WTC11 (cell line): ENCODE measurements at regions of chr3 and their contacts with region 1.

Region 1: DNA sequence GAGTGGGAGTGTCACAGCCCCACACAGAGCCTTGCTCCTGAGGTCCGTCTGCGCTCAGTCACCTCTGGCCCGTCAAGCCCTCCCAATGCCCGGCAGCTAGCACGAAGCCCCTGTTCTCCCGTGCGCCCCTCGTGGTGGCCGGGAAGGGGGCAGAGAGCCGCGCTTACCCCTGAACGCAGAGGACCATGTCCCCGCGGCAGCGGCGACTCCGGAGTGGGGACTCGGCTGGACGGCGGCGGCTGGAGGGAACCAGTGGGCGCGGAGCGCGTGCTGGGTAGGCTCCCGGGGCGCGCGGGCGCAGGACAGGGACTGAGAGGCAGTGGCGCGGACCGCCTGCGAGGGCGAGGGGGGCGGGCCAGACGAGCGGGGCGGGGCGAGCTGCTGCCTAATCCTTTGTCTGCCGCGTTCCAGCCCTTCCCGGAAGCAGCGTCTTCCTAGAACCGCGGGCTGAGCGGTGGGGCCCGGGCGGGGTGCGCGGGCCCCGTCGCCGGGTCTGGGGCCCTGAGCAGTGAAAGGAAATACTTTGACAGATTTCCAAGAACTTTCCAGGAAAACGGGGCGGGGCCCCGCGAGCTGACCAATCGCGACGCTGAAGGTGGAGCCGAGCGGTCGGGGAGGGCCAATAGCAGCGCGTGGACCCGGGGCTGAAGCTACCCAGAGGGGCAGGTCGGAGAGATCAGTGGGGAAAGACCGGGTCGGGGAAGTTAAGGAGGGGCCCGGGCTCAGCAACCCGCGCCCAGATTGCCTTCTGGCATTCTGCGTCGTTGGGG is at the start of gene CISH:
- DNase-seq: peak; percentile 94
- ATAC-seq: peak; percentile 81
- H3K4me3 Mint-ChIP-seq: peak within 1 kb of the TSS; percentile 76
- H3K27ac Mint-ChIP-seq: no peak within 1 kb of the TSS
- H3K4me1 Mint-ChIP-seq: peaks cover 24% of the 10 kb centered on the region
- H3K27me3 Mint-ChIP-seq: peaks cover 51% of the 10 kb centered on the region
- CTCF ChIP-seq: peak; percentile 46; the same call in 1 of the 2 replicates
- total RNA-seq, gene CISH: 1.8 to 2.4 TPM (median 1.9 TPM) in 3 replicates

Region 2: DNA sequence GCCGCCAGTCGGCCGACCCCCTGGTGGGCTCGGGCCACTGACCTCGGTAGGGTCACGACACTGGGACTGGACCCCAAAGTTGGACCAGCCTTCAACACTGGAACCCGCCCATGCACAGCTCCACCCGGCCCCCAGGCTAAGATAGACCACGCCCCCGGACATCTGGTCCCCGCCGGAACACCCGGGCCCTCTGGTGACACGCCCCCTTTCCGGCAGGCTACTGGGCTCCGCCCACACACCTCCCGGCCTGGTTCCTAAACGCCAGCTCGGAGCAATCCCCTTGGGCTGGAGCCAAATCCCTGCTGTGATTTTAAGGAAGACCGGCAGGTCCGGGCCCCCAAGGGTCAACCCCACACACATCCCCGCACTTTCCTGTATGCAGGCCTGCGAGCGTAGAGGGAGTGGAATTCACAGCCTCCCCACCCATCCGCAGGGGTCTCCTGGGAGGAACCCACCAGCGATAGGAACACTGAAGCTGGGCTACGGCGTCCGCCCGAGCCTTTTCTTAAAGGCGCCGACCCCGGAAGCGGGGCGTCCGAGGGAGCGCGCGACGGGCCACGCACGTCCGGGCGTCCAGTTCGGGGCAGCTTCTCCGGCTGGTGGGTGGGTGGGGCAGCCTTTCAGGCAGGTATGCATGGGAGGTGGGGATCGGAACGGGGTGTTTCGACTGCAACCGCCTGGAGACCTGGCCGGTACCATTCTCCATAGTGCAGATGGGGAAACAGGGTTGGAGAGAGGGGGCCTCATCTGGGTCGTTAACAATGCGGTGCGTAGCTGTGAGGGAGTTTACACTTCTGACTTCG is 42.5 kb before region 1 on chr3 and contains the start of gene HEMK1:
- CTCF ChIA-PET with region 1: interaction called, 98 read pairs
- POLR2A ChIA-PET with region 1: no interaction called
- DNase-seq: peak; percentile 99
- ATAC-seq: peak; percentile 72
- H3K4me3 Mint-ChIP-seq: peak within 1 kb of the TSS; percentile 96
- H3K27ac Mint-ChIP-seq: peak within 1 kb of the TSS; percentile 91
- H3K4me1 Mint-ChIP-seq: peaks cover 17% of the 10 kb centered on the region
- H3K27me3 Mint-ChIP-seq: peaks cover 17% of the 10 kb centered on the region
- CTCF ChIP-seq: no peak
- total RNA-seq, gene HEMK1: 15.2 to 20.9 TPM (median 15.8 TPM) in 3 replicates

Region 3: GRCh38 chr3:50600841-50601591 is 10.6 kb before region 1 on chr3:
- CTCF ChIA-PET with region 1: interaction called, 24 read pairs
- POLR2A ChIA-PET with region 1: no interaction called
- DNase-seq: no peak
- ATAC-seq: peak; percentile 33
- H3K4me3 Mint-ChIP-seq: no peak overlapping the region
- H3K27ac Mint-ChIP-seq: no peak overlapping the region; the same call in 1 of the 2 replicates
- H3K4me1 Mint-ChIP-seq: no peaks in the 10 kb centered on the region
- H3K27me3 Mint-ChIP-seq: peaks cover 3% of the 10 kb centered on the region
- CTCF ChIP-seq: no peak

Region 4: DNA sequence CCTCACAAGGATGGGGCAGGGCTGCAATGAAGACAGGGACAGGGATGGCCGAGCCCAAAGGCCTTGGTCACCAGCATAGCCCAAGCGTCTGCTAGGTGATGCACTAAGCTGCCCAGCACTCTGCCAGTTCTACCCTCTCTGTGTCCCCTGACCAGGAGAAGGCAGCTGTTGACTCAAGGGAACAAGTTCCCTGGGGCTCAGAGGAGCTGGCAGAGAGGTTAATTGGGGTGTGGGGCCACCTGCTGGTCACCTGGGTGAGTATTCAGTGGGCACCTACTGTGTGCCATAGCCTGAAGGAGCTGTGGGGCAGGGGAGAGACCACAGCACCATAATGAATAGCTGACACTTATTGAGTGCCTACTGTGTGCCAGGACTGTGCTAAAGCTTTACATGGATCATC is 41.1 kb after region 1 on chr3:
- CTCF ChIA-PET with region 1: interaction called, 202 read pairs
- POLR2A ChIA-PET with region 1: interaction called, 8 read pairs
- DNase-seq: peak; percentile 70
- ATAC-seq: peak; percentile 73
- H3K4me3 Mint-ChIP-seq: no peak overlapping the region
- H3K27ac Mint-ChIP-seq: no peak overlapping the region
- H3K4me1 Mint-ChIP-seq: peaks cover 26% of the 10 kb centered on the region
- H3K27me3 Mint-ChIP-seq: peaks cover 3% of the 10 kb centered on the region; the same call in 1 of the 2 replicates
- CTCF ChIP-seq: peak; percentile 24

Region 5: DNA sequence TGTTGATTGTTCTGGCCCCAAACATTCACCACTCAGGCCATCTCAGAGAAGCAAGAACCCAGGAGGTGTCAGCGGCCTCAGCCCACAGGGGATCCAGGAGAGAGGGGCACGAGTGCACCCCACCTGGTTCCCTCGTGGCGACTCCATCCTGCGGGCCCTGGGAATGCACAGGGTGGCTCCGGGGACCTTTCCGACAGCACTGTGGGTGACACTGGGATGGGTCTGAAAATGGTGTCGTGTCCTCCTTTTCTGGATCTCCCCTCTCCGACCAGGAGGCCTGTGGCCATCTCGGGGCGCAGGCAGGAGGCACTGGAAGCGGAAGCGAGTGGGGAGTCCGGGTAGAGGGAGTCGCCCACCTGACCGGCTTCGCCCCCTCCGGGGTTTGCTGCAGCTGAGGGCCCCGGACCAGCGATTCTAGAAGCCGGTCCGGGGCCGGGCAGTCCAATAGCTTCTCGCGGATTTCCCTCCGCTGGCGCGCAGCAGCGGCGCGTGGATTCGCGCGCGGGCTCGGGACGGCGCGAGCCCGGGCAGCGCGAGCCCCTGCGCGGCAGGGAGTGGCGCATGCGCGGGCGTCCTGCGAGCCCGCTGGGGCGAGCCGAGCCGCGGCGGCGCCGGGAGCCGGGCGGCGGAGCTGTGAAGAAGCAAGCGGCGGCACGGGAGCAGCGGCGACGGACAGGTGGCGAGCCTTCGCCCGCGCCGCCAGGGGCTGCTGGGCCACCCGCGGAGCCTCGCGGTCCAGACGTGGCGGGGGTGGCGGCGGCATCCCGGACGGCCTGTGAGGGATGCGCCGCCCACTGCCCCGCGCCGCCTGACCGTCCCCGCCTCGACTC is 62.9 kb after region 1 on chr3 and contains the start of gene DOCK3:
- CTCF ChIA-PET with region 1: interaction called, 15 read pairs
- POLR2A ChIA-PET with region 1: no interaction called
- DNase-seq: peak; percentile 55
- ATAC-seq: peak; percentile 59
- H3K4me3 Mint-ChIP-seq: peak within 1 kb of the TSS; percentile 76
- H3K27ac Mint-ChIP-seq: no peak within 1 kb of the TSS
- H3K4me1 Mint-ChIP-seq: peaks cover 29% of the 10 kb centered on the region
- H3K27me3 Mint-ChIP-seq: peaks cover 33% of the 10 kb centered on the region
- CTCF ChIP-seq: no peak
- total RNA-seq, gene DOCK3: 5.2 to 5.6 TPM (median 5.5 TPM) in 3 replicates

Region 6: DNA sequence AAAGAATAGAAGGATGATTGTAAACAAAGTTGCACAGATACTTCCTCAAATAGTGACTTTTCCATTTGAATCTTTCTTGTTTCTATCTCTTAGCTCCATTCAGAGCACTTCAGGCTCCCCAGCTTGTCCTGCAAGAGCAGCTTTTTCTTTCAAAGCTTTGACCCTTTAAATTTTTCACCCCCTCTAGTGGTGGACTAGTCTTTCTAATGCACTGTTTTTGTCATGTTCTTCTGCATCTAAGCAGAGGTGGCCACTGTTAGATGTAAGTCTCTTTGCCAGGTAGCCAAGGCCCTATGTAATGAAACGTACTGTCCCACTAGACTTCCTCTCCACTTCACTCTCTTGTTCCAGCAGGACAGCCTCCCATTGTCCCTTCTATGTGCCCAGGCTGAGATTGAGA is 699.4 kb after region 1 on chr3:
- CTCF ChIA-PET with region 1: interaction called, 12 read pairs
- POLR2A ChIA-PET with region 1: no interaction called
- DNase-seq: no peak
- ATAC-seq: peak; percentile 51
- H3K4me3 Mint-ChIP-seq: no peak overlapping the region
- H3K27ac Mint-ChIP-seq: no peak overlapping the region
- H3K4me1 Mint-ChIP-seq: no peaks in the 10 kb centered on the region
- H3K27me3 Mint-ChIP-seq: no peaks in the 10 kb centered on the region
- CTCF ChIP-seq: no peak

Region 7: GRCh38 chr3:51391075-51391567 is 779.5 kb after region 1 on chr3 and contains the start of gene RBM15B:
- CTCF ChIA-PET with region 1: interaction called, 12 read pairs
- POLR2A ChIA-PET with region 1: interaction called, 3 read pairs
- DNase-seq: peak; percentile 98
- ATAC-seq: peak; percentile 86
- H3K4me3 Mint-ChIP-seq: peak within 1 kb of the TSS; percentile 76
- H3K27ac Mint-ChIP-seq: peak within 1 kb of the TSS; percentile 86
- H3K4me1 Mint-ChIP-seq: peaks cover 54% of the 10 kb centered on the region
- H3K27me3 Mint-ChIP-seq: no peaks in the 10 kb centered on the region
- CTCF ChIP-seq: no peak; the same call in 1 of the 2 replicates
- total RNA-seq, gene RBM15B: 53.9 to 55.6 TPM (median 55.4 TPM) in 3 replicates